Activated CD4-positive, alpha-beta memory T cell treated with anti-CD3 and anti-CD28 coated beads for 36 hours (primary cell): ENCODE measurements at regions of chr11 and their contacts with region 1.

Region 1: DNA sequence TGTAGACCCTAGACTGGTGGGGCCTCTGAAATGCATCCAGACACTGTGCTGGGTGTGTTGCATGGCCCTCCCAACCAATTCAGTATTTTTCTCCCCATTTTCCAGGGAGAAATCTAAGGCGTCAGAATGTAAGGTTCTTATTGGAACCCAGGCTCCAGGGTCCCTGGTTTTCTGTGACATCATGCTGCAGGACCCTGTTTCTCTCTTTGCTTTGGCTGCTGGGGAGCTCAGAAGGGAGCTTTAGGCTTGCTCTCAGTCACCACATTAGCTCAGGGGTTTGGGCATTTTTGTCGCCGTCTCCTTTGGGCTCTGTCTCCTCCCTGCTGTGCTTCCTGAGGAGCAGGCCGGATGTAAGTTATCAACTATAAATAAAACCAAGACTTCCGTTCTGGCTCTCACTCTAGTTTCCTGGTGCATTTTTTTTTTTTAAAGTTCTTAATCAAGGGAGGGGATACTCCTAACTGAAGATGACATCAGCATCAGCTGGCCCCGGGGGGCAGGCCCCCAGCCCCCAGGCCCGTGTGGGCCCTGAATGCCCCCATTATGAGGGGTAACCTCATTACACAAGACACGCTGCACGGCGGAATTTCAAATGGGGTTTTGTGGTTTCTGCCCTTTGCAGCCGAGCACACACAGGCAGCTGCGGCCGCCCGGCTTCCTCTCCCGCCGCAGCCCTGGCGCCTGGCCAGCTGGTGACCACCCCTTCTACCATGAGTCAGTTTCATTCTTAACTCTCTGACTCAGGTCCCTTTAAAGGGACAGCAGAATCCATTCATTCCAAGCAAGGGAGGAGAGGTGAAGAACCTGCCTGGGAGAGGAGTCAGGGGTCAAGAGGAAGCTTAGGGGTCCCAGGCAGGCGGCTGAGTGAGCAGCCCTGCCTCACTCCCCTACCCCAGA is 3.2 kb downstream of the MYEOV start:
- DNase-seq: peak; percentile 94
- H3K4me3 Mint-ChIP-seq: no peak overlapping the region
- H3K27ac Mint-ChIP-seq: peak overlapping the region; percentile 59
- H3K4me1 Mint-ChIP-seq: peaks cover 46% of the 10 kb centered on the region
- H3K27me3 Mint-ChIP-seq: no peaks in the 10 kb centered on the region

Region 2: GRCh38 chr11:69101115-69101791 is 195.9 kb before region 1 on chr11:
- CTCF ChIA-PET with region 1: interaction called, 3 read pairs
- POLR2A ChIA-PET with region 1: no interaction called
- intact Hi-C with region 1: loop called (anchors 2 kb)
- DNase-seq: peak; percentile 79
- H3K4me3 Mint-ChIP-seq: no peak overlapping the region
- H3K27ac Mint-ChIP-seq: no peak overlapping the region
- H3K4me1 Mint-ChIP-seq: peaks cover 2% of the 10 kb centered on the region
- H3K27me3 Mint-ChIP-seq: peaks cover 4% of the 10 kb centered on the region

Region 3: DNA sequence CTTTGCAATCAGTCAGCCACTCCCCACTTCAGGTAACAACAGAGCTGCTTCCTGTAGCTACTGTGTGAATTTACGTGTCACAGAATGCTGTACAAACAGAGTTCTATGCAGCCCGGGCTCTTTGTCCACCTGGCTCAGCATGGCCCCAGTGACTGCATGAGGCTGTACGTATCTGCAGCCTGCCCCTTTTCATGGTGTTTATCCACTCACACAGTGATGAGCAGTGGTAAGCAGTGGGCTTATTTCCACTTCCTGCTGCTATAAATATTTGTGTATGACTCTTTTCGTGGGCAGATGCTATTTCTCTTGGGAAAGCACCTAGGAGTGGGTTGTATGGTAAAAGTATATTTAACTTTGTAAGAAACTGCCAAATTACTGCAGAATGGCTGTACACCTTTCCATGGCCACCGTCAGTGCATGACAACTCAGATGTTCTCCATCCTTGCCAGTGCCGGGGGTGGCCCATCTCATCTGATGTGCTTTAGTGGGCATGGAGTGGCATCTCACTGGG is 40.1 kb after region 1 on chr11:
- CTCF ChIA-PET with region 1: no interaction called
- POLR2A ChIA-PET with region 1: no interaction called
- intact Hi-C with region 1: loop called (anchors 1 kb)
- DNase-seq: peak; percentile 55
- H3K4me3 Mint-ChIP-seq: peak overlapping the region; percentile 3
- H3K27ac Mint-ChIP-seq: peak overlapping the region; percentile 64
- H3K4me1 Mint-ChIP-seq: peaks cover 33% of the 10 kb centered on the region
- H3K27me3 Mint-ChIP-seq: no peaks in the 10 kb centered on the region

Region 4: GRCh38 chr11:69443138-69443967 is 146.2 kb after region 1 on chr11:
- CTCF ChIA-PET with region 1: no interaction called
- POLR2A ChIA-PET with region 1: no interaction called
- intact Hi-C with region 1: loop called (anchors 1 kb)
- DNase-seq: peak; percentile 84
- H3K4me3 Mint-ChIP-seq: peak overlapping the region; percentile 45
- H3K27ac Mint-ChIP-seq: no peak overlapping the region
- H3K4me1 Mint-ChIP-seq: peaks cover 13% of the 10 kb centered on the region
- H3K27me3 Mint-ChIP-seq: peaks cover 17% of the 10 kb centered on the region

Region 5: GRCh38 chr11:69642913-69643632 is 345.9 kb after region 1 on chr11:
- CTCF ChIA-PET with region 1: interaction called, 19 read pairs
- POLR2A ChIA-PET with region 1: no interaction called
- intact Hi-C with region 1: loop called (anchors 1 kb)
- DNase-seq: peak; percentile 81
- H3K4me3 Mint-ChIP-seq: peak overlapping the region; percentile 57
- H3K27ac Mint-ChIP-seq: no peak overlapping the region
- H3K4me1 Mint-ChIP-seq: peaks cover 17% of the 10 kb centered on the region
- H3K27me3 Mint-ChIP-seq: peaks cover 22% of the 10 kb centered on the region